Colonic mucosa (tissue), 4 donors: ENCODE measurements at regions of chr3 and their contacts with region 1.

Region 1: GRCh38 chr3:132006605-132007204 is 28.1 kb downstream of the CPNE4 start:
- DNase-seq: peak; percentile 28
- H3K4me3 ChIP-seq: no peak overlapping the region
- H3K27ac ChIP-seq: no peak overlapping the region
- H3K4me1 ChIP-seq: no peaks in the 10 kb centered on the region
- H3K27me3 ChIP-seq: no peaks in the 10 kb centered on the region
- CTCF ChIP-seq: peak; percentile 31

Region 2: DNA sequence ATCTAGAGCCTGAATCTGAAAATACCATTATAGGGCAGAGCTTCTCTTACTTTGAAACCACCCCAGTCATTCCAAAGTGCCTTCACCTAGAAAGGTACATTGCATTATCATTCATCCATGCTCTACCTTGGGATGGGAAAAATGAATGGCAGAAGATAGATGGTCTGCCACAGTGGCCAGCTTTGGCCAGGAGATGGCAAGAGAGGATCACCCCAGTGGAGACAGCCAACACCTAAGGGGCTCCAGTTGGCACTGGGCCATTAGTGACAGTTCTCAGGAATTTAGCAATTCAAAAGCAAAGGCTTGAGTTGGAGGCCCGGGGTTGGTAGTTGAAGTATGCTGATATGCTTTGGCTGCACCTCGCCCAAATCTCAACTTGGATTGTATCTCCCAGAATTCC is 250.3 kb before region 1 on chr3:
- intact Hi-C with region 1: no loop called
- DNase-seq: no peak
- H3K4me3 ChIP-seq: no peak overlapping the region
- H3K27ac ChIP-seq: no peak overlapping the region
- H3K4me1 ChIP-seq: no peaks in the 10 kb centered on the region
- H3K27me3 ChIP-seq: no peaks in the 10 kb centered on the region
- CTCF ChIP-seq: no peak

Region 3: GRCh38 chr3:132189601-132190000 is 182.9 kb after region 1 on chr3:
- intact Hi-C with region 1: loop called (anchors 5 kb)
- DNase-seq: no peak
- H3K4me3 ChIP-seq: no peak overlapping the region
- H3K27ac ChIP-seq: no peak overlapping the region
- H3K4me1 ChIP-seq: no peaks in the 10 kb centered on the region
- H3K27me3 ChIP-seq: no peaks in the 10 kb centered on the region
- CTCF ChIP-seq: no peak

Region 4: GRCh38 chr3:133023362-133023761 is 1016.7 kb after region 1 on chr3:
- intact Hi-C with region 1: no loop called
- DNase-seq: no peak
- H3K4me3 ChIP-seq: no peak overlapping the region
- H3K27ac ChIP-seq: no peak overlapping the region
- H3K4me1 ChIP-seq: no peaks in the 10 kb centered on the region
- H3K27me3 ChIP-seq: no peaks in the 10 kb centered on the region
- CTCF ChIP-seq: no peak